Thyroid gland (tissue), 4 donors: ENCODE measurements at regions of chr2 and their contacts with region 1.

Region 1: GRCh38 chr2:165401285-165401852 is 68.1 kb upstream of the CSRNP3 start:
- DNase-seq: peak in 1 of 2 donors; percentile 14
- H3K4me3 ChIP-seq: no peak overlapping the region
- H3K27ac ChIP-seq: no peak overlapping the region
- H3K4me1 ChIP-seq: no peaks in the 10 kb centered on the region
- H3K27me3 ChIP-seq: no peaks in the 10 kb centered on the region
- CTCF ChIP-seq: peak; percentile 41 to 86 (median 66)
- POLR2A ChIP-seq: no peak

Region 2: GRCh38 chr2:165700531-165700930 is 299.2 kb after region 1 on chr2:
- intact Hi-C with region 1: loop called (anchors 5 kb)
- DNase-seq: no peak
- H3K4me3 ChIP-seq: no peak overlapping the region
- H3K27ac ChIP-seq: no peak overlapping the region
- H3K4me1 ChIP-seq: peaks cover 11 to 14% of the 10 kb centered on the region in 2 donors
- H3K27me3 ChIP-seq: no peaks in the 10 kb centered on the region
- CTCF ChIP-seq: no peak
- POLR2A ChIP-seq: no peak

Region 3: DNA sequence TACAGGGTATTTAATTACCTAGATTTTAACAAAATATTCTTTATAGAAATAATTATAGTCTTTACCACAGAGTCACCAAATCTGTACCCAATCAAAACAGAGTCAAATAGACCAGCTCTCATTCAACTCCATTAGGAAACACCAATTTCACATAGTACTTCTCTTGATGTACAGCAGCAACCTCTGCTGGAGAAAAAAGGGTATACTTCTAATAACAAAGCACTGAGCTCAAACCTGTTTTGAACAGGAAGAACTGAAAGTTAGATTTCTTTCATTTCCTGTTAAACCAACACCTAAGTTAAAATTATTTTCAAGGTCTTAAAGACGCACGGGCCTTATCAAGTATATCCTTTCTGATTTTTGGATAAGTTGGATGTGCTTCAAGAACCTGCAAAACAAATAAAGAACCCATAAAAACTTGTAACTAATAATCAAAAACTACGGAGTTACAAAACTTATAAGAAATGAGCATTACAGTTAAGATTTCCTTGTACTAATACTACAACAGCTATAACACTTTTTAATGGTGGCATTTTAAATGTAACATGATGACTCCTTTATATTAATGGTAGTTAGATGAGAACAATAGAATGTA is 473.2 kb after region 1 on chr2:
- intact Hi-C with region 1: loop called (anchors 10 kb)
- DNase-seq: no peak
- H3K4me3 ChIP-seq: no peak overlapping the region
- H3K27ac ChIP-seq: no peak overlapping the region
- H3K4me1 ChIP-seq: no peaks in the 10 kb centered on the region
- H3K27me3 ChIP-seq: no peaks in the 10 kb centered on the region
- CTCF ChIP-seq: peak in 5 of 6 experiments; percentile 49 to 85 (median 72)
- POLR2A ChIP-seq: no peak